Dendritic cell treated with granulocyte-macrophage colony-stimulating factor and Interleukin-4, amounts not matched to agents 40 ng/mL and 50 ng/mL, for 4 days (primary cell): ENCODE measurements at regions of chr11 and their contacts with region 1.

Region 1: GRCh38 chr11:59822989-59823566 is 12.5 kb upstream of the MRPL16 start:
- H3K4me3 Mint-ChIP-seq: no peak overlapping the region
- H3K27ac Mint-ChIP-seq: no peak overlapping the region
- H3K4me1 Mint-ChIP-seq: peaks cover 17% of the 10 kb centered on the region
- H3K27me3 Mint-ChIP-seq: no peaks in the 10 kb centered on the region

Region 2: DNA sequence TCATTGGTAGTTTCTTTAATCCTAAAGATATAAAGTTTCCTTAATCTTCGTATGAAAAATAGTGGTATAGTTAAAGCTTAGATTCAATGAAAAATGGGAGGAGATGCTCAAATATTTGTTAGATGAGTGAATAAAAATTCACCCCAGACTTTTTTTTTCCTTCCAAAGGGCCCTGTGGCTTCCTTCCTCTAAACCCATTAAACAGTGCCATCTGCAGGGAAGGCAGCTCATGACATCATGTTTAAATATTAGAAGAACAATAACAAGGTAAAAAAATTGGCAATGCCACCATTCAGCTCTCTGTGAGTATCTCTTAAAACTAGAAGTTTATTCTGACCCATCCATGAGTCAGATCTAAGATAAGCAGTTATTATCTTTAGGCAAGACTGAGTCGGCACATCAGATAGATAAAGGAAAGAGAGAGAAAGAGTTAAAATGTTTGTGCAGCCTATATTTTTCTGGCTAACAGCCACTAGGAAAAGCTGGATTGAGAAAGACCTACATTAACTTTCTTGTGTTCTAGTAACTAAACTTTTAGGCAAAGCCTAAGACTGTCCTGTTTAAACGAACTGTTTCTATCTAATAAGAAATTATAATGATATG is 96.0 kb after region 1 on chr11:
- intact Hi-C with region 1: loop called (anchors 2 kb)
- H3K4me3 Mint-ChIP-seq: no peak overlapping the region
- H3K27ac Mint-ChIP-seq: no peak overlapping the region
- H3K4me1 Mint-ChIP-seq: no peaks in the 10 kb centered on the region
- H3K27me3 Mint-ChIP-seq: no peaks in the 10 kb centered on the region

Region 3: GRCh38 chr11:60130496-60130895 is 307.4 kb after region 1 on chr11:
- intact Hi-C with region 1: loop called (anchors 1 kb)
- H3K4me3 Mint-ChIP-seq: no peak overlapping the region
- H3K27ac Mint-ChIP-seq: no peak overlapping the region
- H3K4me1 Mint-ChIP-seq: peaks cover 5% of the 10 kb centered on the region
- H3K27me3 Mint-ChIP-seq: no peaks in the 10 kb centered on the region